PC-3 (cell line): ENCODE measurements at regions of chr3 and their contacts with region 1.

Region 1: GRCh38 chr3:150469031-150469942 is 61.2 kb downstream of the TSC22D2 start:
- DNase-seq: peak; percentile 98
- ATAC-seq: peak; percentile 84
- H3K4me3 ChIP-seq: peak overlapping the region; percentile 64
- H3K27ac ChIP-seq: peak overlapping the region; percentile 99
- H3K4me1 ChIP-seq: peaks cover 38% of the 10 kb centered on the region
- H3K27me3 ChIP-seq: no peaks in the 10 kb centered on the region
- CTCF ChIP-seq: no peak

Region 2: GRCh38 chr3:150449169-150449721 is 20.0 kb before region 1 on chr3:
- CTCF ChIA-PET with region 1: no interaction called
- POLR2A ChIA-PET with region 1: no interaction called
- intact Hi-C with region 1: loop called (anchors 1 kb)
- DNase-seq: peak; percentile 80
- ATAC-seq: peak; percentile 65
- H3K4me3 ChIP-seq: 0 out of 2 replicates have a peak overlapping the region, but pooled peaks have one; percentile 37
- H3K27ac ChIP-seq: peak overlapping the region; percentile 69
- H3K4me1 ChIP-seq: peaks cover 65% of the 10 kb centered on the region
- H3K27me3 ChIP-seq: no peaks in the 10 kb centered on the region
- CTCF ChIP-seq: no peak

Region 3: GRCh38 chr3:150503402-150504099 is 34.3 kb after region 1 on chr3:
- CTCF ChIA-PET with region 1: no interaction called
- POLR2A ChIA-PET with region 1: no interaction called
- intact Hi-C with region 1: no loop called
- DNase-seq: no peak
- ATAC-seq: no peak
- H3K4me3 ChIP-seq: no peak overlapping the region
- H3K27ac ChIP-seq: no peak overlapping the region
- H3K4me1 ChIP-seq: peaks cover 4% of the 10 kb centered on the region
- H3K27me3 ChIP-seq: no peaks in the 10 kb centered on the region
- CTCF ChIP-seq: 0 out of 2 replicates have a peak, but pooled peaks have one; percentile 12